Right cardiac atrium (tissue), 5 donors: ENCODE measurements at regions of chr9 and their contacts with region 1.

Region 1: DNA sequence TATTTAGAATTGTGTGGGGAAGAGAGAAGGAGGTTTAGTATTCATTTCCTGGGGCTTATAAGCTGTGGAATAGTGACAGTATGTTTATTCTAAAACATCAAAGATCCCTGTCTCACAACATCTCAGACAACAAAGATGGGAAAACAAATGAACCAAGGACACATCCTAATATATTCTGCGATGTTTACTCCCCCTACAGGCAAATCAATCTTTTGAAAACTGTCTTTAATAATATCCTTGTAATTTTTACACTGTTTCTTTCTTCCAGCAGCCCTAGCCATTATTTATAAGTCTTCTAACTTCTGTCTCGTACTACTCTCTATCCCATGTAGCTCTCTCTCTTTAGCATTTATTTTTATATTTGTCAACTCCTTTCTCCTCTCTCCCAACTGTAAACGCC is 33.5 kb upstream of the TMEM252 start:
- DNase-seq: no peak
- ATAC-seq: no peak
- H3K4me3 ChIP-seq: no peak overlapping the region
- H3K27ac ChIP-seq: no peak overlapping the region
- H3K4me1 ChIP-seq: no peaks in the 10 kb centered on the region
- H3K27me3 ChIP-seq: no peaks in the 10 kb centered on the region

Region 2: DNA sequence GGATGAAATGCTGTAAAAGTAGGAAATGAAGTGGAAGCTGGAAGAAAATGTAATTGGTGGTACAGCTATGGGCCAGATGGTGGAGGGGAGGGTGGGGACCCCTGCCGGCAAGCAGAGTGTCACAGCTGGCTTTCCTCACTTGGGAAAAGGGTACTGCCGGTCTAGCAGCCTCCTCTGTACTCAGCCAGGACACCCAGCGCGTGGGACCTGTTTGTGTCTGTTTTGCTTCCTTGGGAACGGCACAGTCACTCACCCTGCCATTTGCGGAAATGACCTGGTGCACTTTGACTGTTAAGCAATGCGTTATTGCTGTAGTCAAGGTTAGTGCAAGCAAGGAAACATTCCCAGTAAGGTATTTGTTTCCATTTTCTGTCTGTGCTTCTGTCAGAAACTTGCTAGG is 43.5 kb before region 1 on chr9:
- intact Hi-C with region 1: loop called in 1 of 4 experiments (anchors 5 kb)
- DNase-seq: peak; percentile 77 to 88 (median 87)
- ATAC-seq: peak; percentile 96 to 97
- H3K4me3 ChIP-seq: no peak overlapping the region
- H3K27ac ChIP-seq: peak overlapping the region; percentile 40
- H3K4me1 ChIP-seq: no peaks in the 10 kb centered on the region
- H3K27me3 ChIP-seq: no peaks in the 10 kb centered on the region

Region 3: GRCh38 chr9:68872026-68872501 is 297.9 kb after region 1 on chr9:
- intact Hi-C with region 1: no loop called
- DNase-seq: peak; percentile 18 to 73 (median 72)
- ATAC-seq: peak; percentile 82 to 86
- H3K4me3 ChIP-seq: no peak overlapping the region
- H3K27ac ChIP-seq: peak overlapping the region; percentile 6
- H3K4me1 ChIP-seq: no peaks in the 10 kb centered on the region
- H3K27me3 ChIP-seq: no peaks in the 10 kb centered on the region